Panc1 (cell line): ENCODE measurements at regions of chr1 and their contacts with region 1.

Region 1: DNA sequence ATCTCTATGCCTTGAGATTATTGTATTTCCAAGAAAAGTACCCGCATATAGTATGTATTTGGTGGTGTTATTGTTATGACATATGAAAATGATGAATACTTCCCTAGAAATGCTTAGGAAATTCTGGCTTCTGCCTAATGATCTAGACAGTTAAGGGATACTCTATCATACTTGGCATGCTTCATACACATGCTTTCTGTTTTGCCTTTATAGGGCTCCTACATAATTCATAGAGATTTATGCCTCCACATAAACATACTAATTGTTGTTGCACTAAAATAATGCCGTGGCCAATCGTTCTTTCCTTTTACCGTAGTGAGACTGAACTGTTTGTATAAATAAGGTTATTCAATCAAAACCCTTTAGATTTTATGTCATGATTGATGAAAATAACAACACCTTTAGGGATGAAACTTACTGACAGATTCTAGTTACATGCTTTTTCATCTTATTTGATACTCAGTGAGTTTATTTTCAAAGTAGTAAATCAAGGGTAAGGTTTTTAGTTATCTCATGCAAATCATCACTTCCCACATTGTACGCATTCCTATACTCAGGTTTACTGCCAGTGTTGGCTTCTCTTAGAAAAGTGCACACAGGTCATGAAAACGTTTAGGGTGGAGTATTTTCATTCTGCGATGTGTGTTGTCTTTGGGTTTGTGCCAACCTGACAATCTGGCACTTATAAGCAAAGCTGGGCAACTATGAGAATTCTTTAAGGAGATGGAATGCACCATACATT is 40.5 kb upstream of the SCYL3 start:
- DNase-seq: no peak
- ATAC-seq: peak; percentile 94
- H3K4me3 ChIP-seq: no peak overlapping the region
- H3K27ac ChIP-seq: peak overlapping the region; percentile 82
- H3K4me1 ChIP-seq: peaks cover 23% of the 10 kb centered on the region; the same call in 1 of the 2 replicates
- H3K27me3 ChIP-seq: no peaks in the 10 kb centered on the region
- CTCF ChIP-seq: no peak

Region 2: DNA sequence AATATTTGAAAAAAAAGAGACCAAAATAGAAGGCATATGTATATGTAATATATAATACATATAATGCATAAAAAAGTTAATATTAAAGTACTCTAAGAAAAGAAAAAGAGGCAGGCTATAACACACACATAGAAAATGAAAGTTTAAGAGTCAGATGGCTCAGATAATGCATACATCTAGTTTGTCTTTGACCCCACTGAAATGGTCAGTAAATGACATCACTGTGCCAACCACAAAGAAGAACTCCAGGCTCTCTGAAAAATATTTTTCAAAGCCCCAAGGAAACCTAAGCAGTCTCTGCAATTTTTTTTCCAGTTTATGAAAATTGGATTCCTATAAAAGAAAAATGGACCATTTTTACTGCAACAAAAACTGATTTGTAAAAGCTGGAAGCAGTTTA is 15.0 kb after region 1 on chr1:
- CTCF ChIA-PET with region 1: no interaction called
- POLR2A ChIA-PET with region 1: no interaction called
- in situ Hi-C with region 1: no loop called
- intact Hi-C with region 1: no loop called
- DNase-seq: no peak
- ATAC-seq: no peak
- H3K4me3 ChIP-seq: no peak overlapping the region
- H3K27ac ChIP-seq: no peak overlapping the region
- H3K4me1 ChIP-seq: no peaks in the 10 kb centered on the region
- H3K27me3 ChIP-seq: no peaks in the 10 kb centered on the region
- CTCF ChIP-seq: no peak

Region 3: DNA sequence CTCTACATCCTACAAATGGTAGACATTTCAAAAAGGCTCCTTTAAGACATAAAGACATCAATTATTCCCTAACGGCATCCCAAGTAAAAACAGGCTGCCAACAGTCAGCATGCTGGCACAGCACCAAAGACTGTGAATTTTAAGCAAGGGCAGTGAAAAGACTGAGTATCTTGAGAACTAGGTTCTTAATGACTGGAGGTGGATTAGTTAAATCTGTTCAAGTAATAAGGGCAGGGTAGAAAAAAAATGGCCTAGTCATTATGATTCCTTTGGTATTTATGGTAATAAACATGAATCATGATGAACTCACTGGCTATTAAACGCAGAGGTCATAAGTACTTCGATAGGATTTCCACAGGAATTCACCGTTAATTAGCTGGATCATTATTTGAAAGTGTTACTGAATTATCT is 65.2 kb after region 1 on chr1:
- CTCF ChIA-PET with region 1: no interaction called
- POLR2A ChIA-PET with region 1: no interaction called
- in situ Hi-C with region 1: no loop called
- intact Hi-C with region 1: loop called (anchors 5 kb)
- DNase-seq: peak; percentile 17
- ATAC-seq: peak; percentile 85
- H3K4me3 ChIP-seq: no peak overlapping the region
- H3K27ac ChIP-seq: peak overlapping the region; percentile 84
- H3K4me1 ChIP-seq: peaks cover 18% of the 10 kb centered on the region; the same call in 1 of the 2 replicates
- H3K27me3 ChIP-seq: no peaks in the 10 kb centered on the region
- CTCF ChIP-seq: no peak